ENCODE measurements at regions of chr6 and their contacts with region 1.

Region 1: DNA sequence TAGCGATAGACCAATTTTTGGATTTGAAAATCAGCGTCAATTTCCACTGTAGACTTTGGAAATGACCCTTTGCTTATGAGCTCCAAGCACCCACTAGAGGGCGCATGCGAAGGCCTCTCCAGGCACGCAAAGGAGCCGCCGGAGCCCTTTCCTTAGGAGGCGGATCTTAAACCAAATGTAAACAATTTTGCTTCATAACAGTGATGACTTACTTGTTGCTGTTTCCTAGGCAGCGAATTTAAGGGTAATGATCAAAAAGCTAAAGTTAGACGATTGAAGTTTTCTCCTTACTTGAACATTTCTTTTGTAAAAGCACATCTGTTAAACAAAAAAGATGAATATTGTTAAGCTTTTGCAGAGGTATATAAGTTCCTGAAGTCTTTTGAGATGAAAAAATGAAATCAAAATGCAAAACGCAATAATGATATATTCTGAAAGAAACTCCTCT is 29.2 kb upstream of the EXOC2 start:
- DNase-seq: peak; percentile 62
- H3K4me3 Mint-ChIP-seq: no peak overlapping the region
- H3K27ac Mint-ChIP-seq: no peak overlapping the region
- H3K4me1 Mint-ChIP-seq: peaks cover 5% of the 10 kb centered on the region
- H3K27me3 Mint-ChIP-seq: peaks cover 20% of the 10 kb centered on the region

Region 2: GRCh38 chr6:582370-582769 is 139.7 kb before region 1 on chr6:
- intact Hi-C with region 1: no loop called
- DNase-seq: no peak
- H3K4me3 Mint-ChIP-seq: peak overlapping the region; percentile 61
- H3K27ac Mint-ChIP-seq: peak overlapping the region; percentile 42
- H3K4me1 Mint-ChIP-seq: peaks cover 41% of the 10 kb centered on the region
- H3K27me3 Mint-ChIP-seq: no peaks in the 10 kb centered on the region

Region 3: GRCh38 chr6:741410-742339 is 19.6 kb after region 1 on chr6:
- intact Hi-C with region 1: no loop called
- DNase-seq: no peak
- H3K4me3 Mint-ChIP-seq: no peak overlapping the region
- H3K27ac Mint-ChIP-seq: peak overlapping the region; percentile 63
- H3K4me1 Mint-ChIP-seq: peaks cover 16% of the 10 kb centered on the region
- H3K27me3 Mint-ChIP-seq: peaks cover 5% of the 10 kb centered on the region

Region 4: GRCh38 chr6:786946-787763 is 65.1 kb after region 1 on chr6:
- intact Hi-C with region 1: loop called (anchors 5 kb)
- DNase-seq: no peak
- H3K4me3 Mint-ChIP-seq: no peak overlapping the region
- H3K27ac Mint-ChIP-seq: no peak overlapping the region
- H3K4me1 Mint-ChIP-seq: peaks cover 17% of the 10 kb centered on the region
- H3K27me3 Mint-ChIP-seq: peaks cover 3% of the 10 kb centered on the region